Adrenal gland (tissue), 19 donors: ENCODE measurements at regions of chr17 and their contacts with region 1.

Region 1: GRCh38 chr17:66900126-66901010 is 64.1 kb upstream of the CACNG4 start:
- DNase-seq: no peak
- H3K4me3 ChIP-seq: no peak overlapping the region
- H3K27ac ChIP-seq: no peak overlapping the region
- H3K4me1 ChIP-seq: no peaks in the 10 kb centered on the region
- H3K27me3 ChIP-seq: no peaks in the 10 kb centered on the region
- CTCF ChIP-seq: peak; percentile 25 to 45 (median 30)
- POLR2A ChIP-seq: no peak

Region 2: DNA sequence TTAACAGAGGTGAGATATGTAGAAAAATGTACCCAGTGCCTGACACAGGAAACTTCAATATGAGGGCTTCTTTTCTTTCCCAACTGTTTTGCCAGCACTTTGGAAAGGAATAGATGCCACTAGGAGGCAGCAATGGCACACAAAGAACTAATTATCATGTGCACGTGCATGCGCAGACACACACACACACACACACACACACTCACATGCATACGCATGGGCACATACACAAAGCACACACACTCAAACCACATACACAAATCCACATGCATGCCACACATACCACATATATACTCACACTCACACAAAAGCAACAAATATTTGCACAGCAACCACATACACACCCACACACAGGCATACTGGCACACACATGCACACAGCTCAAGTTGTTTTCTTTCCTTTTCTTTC is 699.7 kb before region 1 on chr17:
- intact Hi-C with region 1: loop called in 1 of 2 experiments (anchors 5 kb)
- DNase-seq: peak; percentile 41 to 69 (median 55)
- H3K4me3 ChIP-seq: no peak overlapping the region
- H3K27ac ChIP-seq: no peak overlapping the region
- H3K4me1 ChIP-seq: no peaks in the 10 kb centered on the region
- H3K27me3 ChIP-seq: no peaks in the 10 kb centered on the region
- CTCF ChIP-seq: peak; percentile 28 to 94 (median 67)
- POLR2A ChIP-seq: no peak

Region 3: GRCh38 chr17:66715745-66716156 is 184.6 kb before region 1 on chr17:
- intact Hi-C with region 1: loop called (anchors 5 to 10 kb)
- DNase-seq: peak in 3 of 7 donors; percentile 21 to 48 (median 23)
- H3K4me3 ChIP-seq: no peak overlapping the region
- H3K27ac ChIP-seq: no peak overlapping the region
- H3K4me1 ChIP-seq: no peaks in the 10 kb centered on the region
- H3K27me3 ChIP-seq: no peaks in the 10 kb centered on the region
- CTCF ChIP-seq: peak; percentile 61 to 75 (median 67)
- POLR2A ChIP-seq: no peak

Region 4: DNA sequence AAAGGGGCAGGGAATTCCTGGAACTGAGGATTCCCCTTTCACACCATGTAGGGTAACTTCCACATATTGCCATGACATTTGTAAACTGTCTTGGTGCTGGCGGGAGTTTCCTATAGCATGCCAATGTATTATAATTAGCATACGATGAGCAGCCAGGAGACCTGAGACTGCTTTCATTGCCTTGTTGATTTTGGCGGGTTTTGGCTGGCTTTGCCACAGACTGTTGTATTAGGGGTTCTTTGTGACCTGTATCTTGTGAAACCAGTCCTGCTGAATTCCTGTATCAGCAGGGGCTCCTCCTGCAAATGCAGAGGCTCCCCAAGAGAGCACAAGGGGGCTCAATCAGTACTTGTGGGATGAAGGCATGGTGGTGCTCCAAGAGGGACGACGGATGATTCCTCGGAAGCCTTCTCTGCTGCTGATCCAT is 169.9 kb before region 1 on chr17:
- intact Hi-C with region 1: loop called in 1 of 2 experiments (anchors 5 kb)
- DNase-seq: no peak
- H3K4me3 ChIP-seq: no peak overlapping the region
- H3K27ac ChIP-seq: no peak overlapping the region
- H3K4me1 ChIP-seq: no peaks in the 10 kb centered on the region
- H3K27me3 ChIP-seq: no peaks in the 10 kb centered on the region
- CTCF ChIP-seq: no peak
- POLR2A ChIP-seq: no peak